Lower leg skin (tissue), 4 donors: ENCODE measurements at regions of chr7 and their contacts with region 1.

Region 1: GRCh38 chr7:22066484-22066883 is 120.8 kb upstream of the CDCA7L start:
- DNase-seq: no peak
- H3K4me3 ChIP-seq: no peak overlapping the region
- CTCF ChIP-seq: no peak
- POLR2A ChIP-seq: no peak

Region 2: GRCh38 chr7:21221129-21221528 is 845.4 kb before region 1 on chr7:
- intact Hi-C with region 1: no loop called
- DNase-seq: no peak
- H3K4me3 ChIP-seq: no peak overlapping the region
- CTCF ChIP-seq: no peak
- POLR2A ChIP-seq: no peak

Region 3: DNA sequence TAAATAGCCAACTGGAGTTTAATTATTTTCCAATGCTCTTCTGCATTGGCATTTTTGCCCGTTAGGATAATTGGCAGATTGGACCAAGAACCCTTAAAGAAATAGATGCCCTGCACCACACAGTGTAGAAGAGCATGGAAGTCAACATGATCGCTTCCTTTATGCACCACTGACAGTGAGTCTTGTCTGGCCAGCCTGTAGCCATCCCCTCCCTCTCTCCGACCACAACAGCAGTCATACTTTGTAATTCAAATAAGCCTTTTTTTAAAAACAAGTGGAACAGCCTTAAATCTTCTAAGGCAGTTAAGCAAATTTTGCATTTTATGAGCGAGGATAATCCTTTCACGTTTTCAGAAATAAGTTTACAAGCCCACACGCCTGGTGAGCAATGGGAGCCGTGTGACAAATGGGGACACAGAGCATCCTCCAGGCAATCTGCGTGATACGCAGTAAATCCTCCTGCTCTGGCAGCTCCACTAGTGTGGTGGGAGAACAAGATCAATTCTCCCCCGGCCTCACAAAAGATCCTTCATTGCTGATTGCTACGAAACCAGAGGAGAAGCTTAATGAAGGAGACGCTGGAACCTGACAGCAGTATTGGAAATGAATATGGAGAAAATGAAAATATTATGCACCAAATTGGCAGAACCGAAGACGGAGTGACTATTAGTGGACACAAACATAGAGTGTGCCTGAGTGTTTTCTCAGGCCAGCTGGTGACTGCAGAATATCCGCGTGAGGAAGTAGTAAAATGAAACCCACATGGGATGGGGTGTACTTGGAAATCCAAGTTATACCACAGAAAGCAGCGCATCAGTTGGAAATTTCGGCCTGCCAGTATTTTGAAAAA is 16.6 kb before region 1 on chr7:
- intact Hi-C with region 1: loop called (anchors 1 kb)
- DNase-seq: no peak
- H3K4me3 ChIP-seq: no peak overlapping the region
- CTCF ChIP-seq: no peak
- POLR2A ChIP-seq: no peak

Region 4: DNA sequence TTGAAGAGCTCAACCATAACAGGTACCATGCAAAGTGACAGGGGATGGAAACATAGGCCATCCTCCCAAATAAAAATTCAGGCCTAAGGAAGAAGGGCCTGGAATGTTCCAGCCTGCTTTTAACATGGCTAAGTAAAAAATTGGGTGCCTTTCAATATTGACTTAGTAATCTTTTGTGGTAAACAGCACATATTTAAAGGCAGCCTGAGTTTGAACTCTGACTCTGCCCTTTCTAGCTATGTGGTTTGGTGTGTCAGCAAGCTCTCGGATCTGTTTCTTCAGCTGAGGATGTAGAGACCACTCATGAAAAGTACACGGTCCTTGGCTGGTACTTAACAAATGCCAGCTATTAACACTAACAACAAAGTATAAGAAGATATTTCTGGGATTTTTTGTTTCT is 71.0 kb after region 1 on chr7:
- intact Hi-C with region 1: no loop called
- DNase-seq: no peak
- H3K4me3 ChIP-seq: no peak overlapping the region
- CTCF ChIP-seq: no peak
- POLR2A ChIP-seq: no peak

Region 5: DNA sequence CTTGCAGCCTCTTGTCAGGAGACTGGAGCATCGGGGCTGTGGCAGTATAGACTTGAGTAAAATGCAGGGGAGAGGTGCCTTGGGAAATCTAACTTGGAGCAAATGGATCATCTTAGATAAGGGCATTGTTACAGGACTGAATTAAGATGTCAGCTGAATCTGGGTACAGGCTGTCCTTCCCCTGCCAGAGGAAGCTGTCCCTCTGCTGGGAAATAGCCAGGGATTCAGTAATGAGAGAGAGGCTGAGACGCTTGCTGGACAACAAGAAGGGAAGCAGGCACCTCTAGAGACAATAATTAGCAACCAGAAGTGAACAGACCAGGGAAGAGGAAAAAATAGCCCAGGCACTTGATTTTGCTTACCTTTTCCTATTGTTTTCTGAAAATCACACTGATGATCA is 311.2 kb after region 1 on chr7:
- intact Hi-C with region 1: no loop called
- DNase-seq: no peak
- H3K4me3 ChIP-seq: no peak overlapping the region
- CTCF ChIP-seq: no peak
- POLR2A ChIP-seq: no peak

Region 6: DNA sequence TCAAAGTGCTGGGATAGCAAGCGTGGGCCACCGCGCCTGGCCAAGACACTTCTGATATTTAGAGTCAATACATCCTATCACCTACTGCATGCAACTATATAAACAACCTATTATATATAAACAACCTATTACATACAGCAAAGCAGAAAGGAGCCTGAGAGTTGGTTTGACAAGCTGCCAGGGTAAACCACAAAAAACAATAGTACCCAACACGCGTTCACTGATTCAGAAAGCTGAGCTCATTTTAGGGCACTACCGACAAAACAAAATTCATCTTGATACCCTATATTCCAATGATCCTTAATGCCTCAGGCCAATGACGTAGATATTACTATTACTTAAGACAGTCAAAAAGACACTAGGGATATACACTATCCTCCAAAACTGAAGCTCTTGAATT is 1248.9 kb after region 1 on chr7:
- intact Hi-C with region 1: no loop called
- DNase-seq: no peak
- H3K4me3 ChIP-seq: no peak overlapping the region
- CTCF ChIP-seq: no peak
- POLR2A ChIP-seq: no peak